Right ventricle myocardium inferior (tissue), 1 donor: ENCODE measurements at regions of chr3 and their contacts with region 1.

Region 1: DNA sequence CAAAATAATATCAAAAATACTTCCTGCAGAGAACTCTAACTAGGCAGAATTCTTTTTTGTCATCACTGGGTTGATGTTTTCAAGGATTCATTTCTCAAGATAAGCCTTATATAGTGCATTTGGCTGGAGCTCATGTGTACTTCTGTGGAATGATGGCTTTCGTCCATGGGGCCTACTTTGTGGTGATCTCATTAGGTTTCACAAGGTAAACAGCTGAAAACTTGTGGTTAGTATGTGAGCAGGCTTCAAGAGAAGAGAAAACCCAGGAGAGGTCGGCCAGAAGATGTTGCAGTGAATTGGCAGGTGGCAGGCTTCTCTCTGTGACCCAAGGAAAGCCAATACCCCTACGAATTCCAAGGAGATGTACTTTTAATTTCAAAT is 121.4 kb upstream of the PHLDB2 start:
- DNase-seq: no peak
- ATAC-seq: peak; percentile 85

Region 2: GRCh38 chr3:111610189-111610588 is 127.5 kb before region 1 on chr3:
- intact Hi-C with region 1: no loop called
- DNase-seq: no peak
- ATAC-seq: no peak

Region 3: DNA sequence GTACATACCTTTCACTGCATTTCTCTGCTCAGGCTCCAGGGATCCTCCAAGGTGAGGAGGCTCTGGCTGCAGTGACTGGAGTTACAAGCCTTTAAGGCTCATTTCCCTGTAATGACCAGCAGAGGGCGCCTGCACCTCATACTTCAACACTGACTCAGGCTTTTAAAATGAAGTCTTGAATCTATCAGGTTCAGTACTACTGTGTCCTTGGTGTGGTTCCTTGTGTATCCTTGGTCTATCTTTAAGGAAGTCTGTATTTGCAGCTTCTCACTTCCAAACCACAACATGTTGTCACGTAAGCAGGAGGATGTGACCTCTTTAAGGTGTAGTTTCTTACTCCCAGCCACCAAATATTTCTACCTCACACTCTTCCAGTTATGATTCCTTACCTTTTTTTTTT is 20.1 kb before region 1 on chr3:
- intact Hi-C with region 1: loop called (anchors 2 kb)
- DNase-seq: peak; percentile 80
- ATAC-seq: peak; percentile 87

Region 4: GRCh38 chr3:111787556-111788463 is 50.1 kb after region 1 on chr3:
- intact Hi-C with region 1: loop called (anchors 5 kb)
- DNase-seq: no peak
- ATAC-seq: peak; percentile 20

Region 5: DNA sequence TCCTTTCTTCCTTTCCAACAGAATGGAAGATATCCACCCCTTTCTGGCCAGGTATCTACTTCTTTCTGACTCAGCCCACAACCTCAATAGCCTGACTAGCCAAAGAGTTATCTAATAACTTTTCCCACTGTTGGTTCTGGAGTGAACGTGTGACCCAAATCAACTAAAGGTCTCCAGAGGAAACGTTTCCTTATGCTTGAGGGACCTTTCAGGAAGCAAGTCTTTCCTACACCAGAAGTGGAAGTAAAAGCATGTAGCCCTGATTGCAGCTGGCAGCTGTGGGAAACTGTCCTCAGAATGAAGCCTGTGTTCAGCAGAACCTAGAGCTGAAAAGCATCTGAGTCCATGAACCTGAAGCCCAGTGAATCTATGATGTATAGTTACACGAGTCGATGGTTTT is 86.7 kb after region 1 on chr3:
- intact Hi-C with region 1: loop called (anchors 2 kb)
- DNase-seq: no peak
- ATAC-seq: no peak

Region 6: DNA sequence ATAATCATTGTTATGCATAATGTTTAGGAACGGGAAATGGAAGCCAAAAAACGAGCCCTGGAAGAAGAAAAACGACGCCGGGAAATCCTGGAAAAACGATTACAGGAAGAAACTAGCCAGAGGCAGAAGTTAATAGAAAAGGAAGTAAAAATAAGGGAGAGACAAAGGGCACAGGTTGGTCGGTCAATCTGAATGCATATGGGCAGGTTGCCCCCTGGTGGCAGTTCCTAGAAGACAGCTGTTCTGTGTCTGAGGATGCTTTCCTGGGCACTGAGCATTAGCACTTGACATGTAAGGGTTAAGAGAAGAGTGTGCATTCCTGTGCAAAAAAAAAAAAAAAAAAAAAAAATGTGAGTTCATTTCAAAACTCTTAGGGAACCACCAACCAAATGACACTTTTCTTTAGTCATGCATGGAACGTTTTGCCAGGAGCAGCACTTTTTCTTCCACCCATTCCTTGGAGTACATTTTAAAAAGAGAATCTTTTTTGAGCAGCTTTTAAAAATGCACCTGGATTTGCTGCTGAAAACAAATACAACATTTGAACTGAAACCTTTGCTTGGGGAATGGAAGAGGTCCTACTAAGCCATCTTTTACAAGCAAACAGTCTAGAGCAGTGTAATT is 230.1 kb after region 1 on chr3:
- intact Hi-C with region 1: loop called (anchors 5 kb)
- DNase-seq: peak; percentile 82
- ATAC-seq: peak; percentile 76